ENCODE measurements at regions of chr2 and their contacts with region 1.

Region 1: GRCh38 chr2:219294356-219295351 is 14.5 kb downstream of the PTPRN start:
- DNase-seq: peak; percentile 84 to 91 (median 88)
- H3K4me3 ChIP-seq: peak overlapping the region; percentile 11 to 17
- H3K4me3 Mint-ChIP-seq: peak overlapping the region; percentile 59 to 84 (median 78)
- H3K27ac ChIP-seq: peak overlapping the region; percentile 33
- H3K27ac Mint-ChIP-seq: peak overlapping the region; percentile 70 to 94 (median 88)
- H3K4me1 ChIP-seq: peaks cover 12% of the 10 kb centered on the region
- H3K4me1 Mint-ChIP-seq: peaks cover 6 to 21% (median 11%) of the 10 kb centered on the region in 4 donors
- H3K27me3 ChIP-seq: no peaks in the 10 kb centered on the region
- H3K27me3 Mint-ChIP-seq: peaks cover 4 to 6% of the 10 kb centered on the region in 2 donors

Region 2: GRCh38 chr2:219057709-219058540 is 236.7 kb before region 1 on chr2:
- CTCF ChIA-PET with region 1: interaction called, 18 read pairs
- POLR2A ChIA-PET with region 1: no interaction called
- intact Hi-C with region 1: loop called (anchors 1 kb)
- DNase-seq: peak; percentile 68 to 75 (median 70)
- H3K4me3 ChIP-seq: peak overlapping the region in 1 of 2 donors; percentile 24
- H3K4me3 Mint-ChIP-seq: peak overlapping the region in 7 of 8 donors; percentile 20 to 74 (median 65)
- H3K27ac ChIP-seq: no peak overlapping the region
- H3K27ac Mint-ChIP-seq: peak overlapping the region in 1 of 7 donors; percentile 30
- H3K4me1 ChIP-seq: peaks cover 35% of the 10 kb centered on the region
- H3K4me1 Mint-ChIP-seq: peaks cover 6 to 40% (median 20%) of the 10 kb centered on the region in 4 donors
- H3K27me3 ChIP-seq: peaks cover 40% of the 10 kb centered on the region
- H3K27me3 Mint-ChIP-seq: peaks cover 33 to 45% of the 10 kb centered on the region in 2 donors

Region 3: DNA sequence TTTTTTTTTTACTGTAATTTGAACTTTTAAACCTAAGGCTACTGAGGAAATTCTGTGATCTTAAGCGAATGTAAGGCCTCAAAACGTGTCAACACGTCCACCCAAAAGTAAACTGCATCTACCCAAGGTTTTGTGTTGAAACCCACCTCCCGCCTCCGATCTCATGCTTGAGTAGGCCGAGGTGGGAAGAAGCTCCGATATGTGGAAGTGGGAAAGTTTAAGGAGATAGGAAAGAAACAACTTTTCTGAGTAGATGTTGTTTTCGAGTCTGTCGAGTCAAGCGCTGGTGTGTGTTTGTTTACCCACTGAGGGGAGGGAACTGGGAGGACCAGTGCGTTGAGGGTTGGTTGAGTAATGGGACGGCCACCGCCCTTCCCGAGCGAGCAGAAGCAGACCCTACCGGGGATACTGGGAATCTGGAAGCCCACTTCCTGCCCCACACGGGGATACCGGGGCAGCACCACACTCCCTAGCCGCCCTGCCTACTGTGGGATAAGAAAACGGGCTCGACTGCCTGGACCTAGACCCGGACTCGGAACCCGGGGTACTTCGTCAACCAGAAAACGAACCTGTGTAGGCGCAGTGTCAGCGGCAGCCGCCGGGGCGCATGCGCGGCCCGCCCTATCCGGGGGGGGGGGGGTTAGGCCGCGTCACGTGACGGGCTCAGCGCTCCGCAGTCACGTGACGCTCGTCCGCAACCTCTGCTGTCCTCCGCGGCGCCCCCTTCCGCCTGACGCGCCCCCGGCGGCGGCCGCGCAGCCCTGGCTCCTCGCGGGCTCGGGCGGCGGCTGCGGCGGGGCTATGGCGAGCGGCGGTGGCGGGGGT is 116.9 kb before region 1 on chr2 and contains the start of gene RETREG2:
- CTCF ChIA-PET with region 1: interaction called, 50 read pairs
- POLR2A ChIA-PET with region 1: interaction called, 27 read pairs
- intact Hi-C with region 1: loop called (anchors 2 kb)
- DNase-seq: peak; percentile 88 to 91 (median 88)
- H3K4me3 ChIP-seq: peak within 1 kb of the TSS; percentile 81 to 96
- H3K4me3 Mint-ChIP-seq: peak within 1 kb of the TSS; percentile 91 to 98 (median 95)
- H3K27ac ChIP-seq: peak within 1 kb of the TSS; percentile 91
- H3K27ac Mint-ChIP-seq: peak within 1 kb of the TSS; percentile 96 to 99 (median 98)
- H3K4me1 ChIP-seq: peaks cover 66% of the 10 kb centered on the region
- H3K4me1 Mint-ChIP-seq: peaks cover 34 to 79% (median 62%) of the 10 kb centered on the region in 4 donors
- H3K27me3 ChIP-seq: no peaks in the 10 kb centered on the region
- H3K27me3 Mint-ChIP-seq: no peaks in the 10 kb centered on the region
- total RNA-seq, gene RETREG2: 123 to 128 TPM

Region 4: GRCh38 chr2:219218732-219219701 is 75.6 kb before region 1 on chr2 and contains the start of gene ABCB6:
- CTCF ChIA-PET with region 1: interaction called, 6 read pairs
- POLR2A ChIA-PET with region 1: interaction called, 15 read pairs
- intact Hi-C with region 1: no loop called
- DNase-seq: peak; percentile 81 to 93 (median 83)
- H3K4me3 ChIP-seq: peak within 1 kb of the TSS; percentile 49 to 68
- H3K4me3 Mint-ChIP-seq: peak within 1 kb of the TSS; percentile 82 to 93 (median 84)
- H3K27ac ChIP-seq: peak within 1 kb of the TSS; percentile 53
- H3K27ac Mint-ChIP-seq: peak within 1 kb of the TSS; percentile 74 to 96 (median 88)
- H3K4me1 ChIP-seq: peaks cover 24% of the 10 kb centered on the region
- H3K4me1 Mint-ChIP-seq: peaks cover 8 to 25% (median 19%) of the 10 kb centered on the region in 4 donors
- H3K27me3 ChIP-seq: no peaks in the 10 kb centered on the region
- H3K27me3 Mint-ChIP-seq: no peaks in the 10 kb centered on the region
- total RNA-seq, gene ABCB6: 10.7 to 11.1 TPM

Region 5: GRCh38 chr2:219253753-219254590 is 40.7 kb before region 1 on chr2 and contains the start of gene TUBA4A:
- CTCF ChIA-PET with region 1: interaction called, 150 read pairs
- POLR2A ChIA-PET with region 1: interaction called, 68 read pairs
- intact Hi-C with region 1: loop called (anchors 1 kb)
- DNase-seq: peak; percentile 89 to 90 (median 90)
- H3K4me3 ChIP-seq: peak within 1 kb of the TSS; percentile 94 to 100
- H3K4me3 Mint-ChIP-seq: peak within 1 kb of the TSS; percentile 85 to 99 (median 94)
- H3K27ac ChIP-seq: peak within 1 kb of the TSS; percentile 87
- H3K27ac Mint-ChIP-seq: peak within 1 kb of the TSS; percentile 92 to 98 (median 97)
- H3K4me1 ChIP-seq: peaks cover 42% of the 10 kb centered on the region
- H3K4me1 Mint-ChIP-seq: peaks cover 34 to 60% (median 45%) of the 10 kb centered on the region in 4 donors
- H3K27me3 ChIP-seq: no peaks in the 10 kb centered on the region
- H3K27me3 Mint-ChIP-seq: no peaks in the 10 kb centered on the region
- total RNA-seq, gene TUBA4A: 242 to 259 TPM

Region 6: DNA sequence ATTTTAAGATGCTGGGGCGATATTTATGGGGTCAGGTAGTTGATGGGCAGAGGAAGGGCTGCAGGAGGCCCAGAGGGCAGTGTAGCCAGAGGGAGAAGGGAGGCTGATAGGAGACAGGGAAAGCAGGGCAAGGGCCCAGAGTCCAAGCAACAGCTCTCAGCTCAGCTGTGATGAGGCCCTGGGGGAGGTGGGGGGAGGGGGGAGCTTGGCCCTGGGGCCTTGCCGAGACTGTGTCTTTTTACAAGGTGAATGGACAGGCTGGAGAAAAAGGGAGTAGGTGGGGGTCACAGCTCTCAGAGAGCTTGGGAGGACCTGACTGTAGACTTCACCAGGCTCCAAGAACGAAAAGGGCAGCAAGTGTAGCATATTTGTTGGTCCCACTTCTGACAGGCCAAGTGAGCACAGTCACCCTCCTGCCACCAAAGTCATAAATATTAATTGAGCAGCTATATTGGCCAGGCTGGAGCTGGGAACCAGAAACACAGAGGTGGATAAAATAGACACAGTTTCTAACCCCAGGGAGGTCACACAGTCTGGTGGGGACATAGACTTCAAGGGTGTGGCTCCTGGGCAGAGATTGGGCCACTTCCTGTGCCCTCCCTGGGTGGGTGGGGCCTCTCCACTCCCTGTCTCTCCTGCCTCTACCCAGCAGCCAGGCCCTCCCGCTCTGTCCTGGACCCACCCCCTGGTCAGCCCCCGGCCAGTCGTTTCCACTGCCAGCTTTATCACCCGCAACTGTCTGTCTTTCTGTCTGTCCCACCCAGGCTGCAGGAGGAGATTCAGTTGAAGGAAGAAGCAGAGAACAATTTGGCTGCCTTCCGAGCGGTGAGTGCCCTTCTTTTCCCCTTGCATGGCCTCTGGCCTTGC is 124.9 kb after region 1 on chr2:
- CTCF ChIA-PET with region 1: no interaction called
- POLR2A ChIA-PET with region 1: no interaction called
- intact Hi-C with region 1: no loop called
- DNase-seq: no peak
- H3K4me3 ChIP-seq: no peak overlapping the region
- H3K4me3 Mint-ChIP-seq: no peak overlapping the region
- H3K27ac ChIP-seq: no peak overlapping the region
- H3K27ac Mint-ChIP-seq: no peak overlapping the region
- H3K4me1 ChIP-seq: no peaks in the 10 kb centered on the region
- H3K4me1 Mint-ChIP-seq: peaks cover 0 to 1% (median 0%) of the 10 kb centered on the region in 4 donors
- H3K27me3 ChIP-seq: no peaks in the 10 kb centered on the region
- H3K27me3 Mint-ChIP-seq: peaks cover 21 to 36% of the 10 kb centered on the region in 2 donors